HCT116 (cell line): ENCODE measurements at regions of chr17 and their contacts with region 1.

Region 1: GRCh38 chr17:48024937-48025906 is 12.4 kb downstream of the COPZ2 start:
- DNase-seq: peak; percentile 98
- ATAC-seq: peak; percentile 73
- H3K4me3 ChIP-seq: peak overlapping the region; percentile 61 to 62
- H3K27ac ChIP-seq: peak overlapping the region; percentile 93
- H3K4me1 ChIP-seq: peaks cover 26 to 45% of the 10 kb centered on the region in 2 experiments
- H3K27me3 ChIP-seq: no peaks in the 10 kb centered on the region
- CTCF ChIP-seq: peak in 2 of 3 experiments; percentile 87 to 92; a peak in 4 of 6 replicates
- POLR2A ChIP-seq: peak; percentile 69
- RAD21 ChIP-seq: no peak

Region 2: GRCh38 chr17:48047741-48048383 is 22.6 kb after region 1 on chr17 and contains the start of gene NFE2L1:
- CTCF ChIA-PET with region 1: interaction called, 38 read pairs
- POLR2A ChIA-PET with region 1: interaction called, 45 read pairs
- RAD21 ChIA-PET with region 1: interaction called, 13 to 15 read pairs
- intact Hi-C with region 1: loop called (anchors 2 kb)
- DNase-seq: peak; percentile 100
- ATAC-seq: peak; percentile 91
- H3K4me3 ChIP-seq: peak within 1 kb of the TSS; percentile 64 to 67
- H3K27ac ChIP-seq: peak within 1 kb of the TSS; percentile 90
- H3K4me1 ChIP-seq: peaks cover 25 to 52% of the 10 kb centered on the region in 2 experiments
- H3K27me3 ChIP-seq: no peaks in the 10 kb centered on the region
- CTCF ChIP-seq: no peak
- POLR2A ChIP-seq: peak; percentile 71
- RAD21 ChIP-seq: no peak
- total RNA-seq, gene NFE2L1: 135 TPM

Region 3: GRCh38 chr17:48093341-48094045 is 68.3 kb after region 1 on chr17:
- CTCF ChIA-PET with region 1: interaction called, 18 read pairs
- POLR2A ChIA-PET with region 1: no interaction called
- RAD21 ChIA-PET with region 1: interaction called, 3 read pairs
- intact Hi-C with region 1: no loop called
- DNase-seq: no peak
- ATAC-seq: no peak
- H3K4me3 ChIP-seq: no peak overlapping the region
- H3K27ac ChIP-seq: no peak overlapping the region
- H3K4me1 ChIP-seq: peaks cover 3 to 19% of the 10 kb centered on the region in 2 experiments; a peak in 2 of 4 replicates
- H3K27me3 ChIP-seq: no peaks in the 10 kb centered on the region
- CTCF ChIP-seq: no peak
- POLR2A ChIP-seq: no peak
- RAD21 ChIP-seq: no peak

Region 4: GRCh38 chr17:48259694-48260291 is 234.6 kb after region 1 on chr17:
- CTCF ChIA-PET with region 1: interaction called, 11 read pairs
- POLR2A ChIA-PET with region 1: no interaction called
- RAD21 ChIA-PET with region 1: no interaction called
- intact Hi-C with region 1: no loop called
- DNase-seq: no peak
- ATAC-seq: peak; percentile 59
- H3K4me3 ChIP-seq: no peak overlapping the region
- H3K27ac ChIP-seq: no peak overlapping the region
- H3K4me1 ChIP-seq: peaks cover 12 to 55% of the 10 kb centered on the region in 2 experiments
- H3K27me3 ChIP-seq: no peaks in the 10 kb centered on the region
- CTCF ChIP-seq: peak; percentile 84 to 98 (median 91)
- POLR2A ChIP-seq: no peak
- RAD21 ChIP-seq: peak; percentile 94

Region 5: DNA sequence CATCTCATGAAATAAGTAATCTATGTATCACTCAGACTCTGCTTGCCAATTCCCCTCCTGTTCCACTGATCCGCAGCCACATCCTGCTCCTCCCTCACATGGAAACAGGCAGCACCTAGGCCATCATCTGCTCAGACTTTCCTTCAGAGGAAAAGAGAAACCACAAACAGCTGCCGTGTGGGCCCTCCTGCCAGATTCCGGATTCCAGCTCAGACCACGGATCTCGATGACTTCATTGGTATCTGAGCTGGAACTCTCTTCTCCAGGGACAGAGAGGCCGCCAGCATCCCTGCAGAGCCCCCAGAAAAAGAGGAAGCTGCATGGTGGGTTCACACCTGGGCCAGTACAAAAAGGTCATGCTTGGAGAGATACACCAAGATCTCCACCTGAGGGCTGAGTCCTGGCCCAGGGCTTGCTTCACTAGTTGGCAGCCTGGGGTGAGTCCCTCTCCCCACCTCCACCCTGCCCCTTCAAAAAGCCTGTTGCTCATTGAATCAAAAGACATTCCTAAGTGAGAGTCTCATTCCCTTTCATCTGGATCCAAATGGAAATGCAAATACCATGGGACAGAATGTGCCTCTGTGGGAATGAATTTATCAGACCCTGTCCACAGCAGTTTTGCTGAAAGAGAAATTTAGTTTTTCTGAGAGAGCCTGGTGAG is 458.4 kb after region 1 on chr17:
- CTCF ChIA-PET with region 1: no interaction called
- POLR2A ChIA-PET with region 1: no interaction called
- RAD21 ChIA-PET with region 1: no interaction called
- intact Hi-C with region 1: loop called (anchors 10 kb)
- DNase-seq: peak; percentile 95
- ATAC-seq: peak; percentile 77
- H3K4me3 ChIP-seq: peak overlapping the region; percentile 8 to 32; a peak in 3 of 4 replicates
- H3K27ac ChIP-seq: peak overlapping the region; percentile 83
- H3K4me1 ChIP-seq: peaks cover 57 to 79% of the 10 kb centered on the region in 2 experiments
- H3K27me3 ChIP-seq: no peaks in the 10 kb centered on the region
- CTCF ChIP-seq: no peak
- POLR2A ChIP-seq: no peak
- RAD21 ChIP-seq: peak; percentile 2

Region 6: GRCh38 chr17:48878918-48879898 is 854.0 kb after region 1 on chr17:
- CTCF ChIA-PET with region 1: interaction called, 15 read pairs
- POLR2A ChIA-PET with region 1: no interaction called
- RAD21 ChIA-PET with region 1: no interaction called
- intact Hi-C with region 1: loop called (anchors 2 kb)
- DNase-seq: peak; percentile 82
- ATAC-seq: peak; percentile 93
- H3K4me3 ChIP-seq: no peak overlapping the region
- H3K27ac ChIP-seq: no peak overlapping the region
- H3K4me1 ChIP-seq: peaks cover 0 to 2% of the 10 kb centered on the region in 2 experiments; a peak in 1 of 4 replicates
- H3K27me3 ChIP-seq: no peaks in the 10 kb centered on the region
- CTCF ChIP-seq: peak; percentile 97 to 100 (median 99)
- POLR2A ChIP-seq: no peak
- RAD21 ChIP-seq: peak; percentile 100